Panc1 (cell line): ENCODE measurements at regions of chr2 and their contacts with region 1.

Region 1: DNA sequence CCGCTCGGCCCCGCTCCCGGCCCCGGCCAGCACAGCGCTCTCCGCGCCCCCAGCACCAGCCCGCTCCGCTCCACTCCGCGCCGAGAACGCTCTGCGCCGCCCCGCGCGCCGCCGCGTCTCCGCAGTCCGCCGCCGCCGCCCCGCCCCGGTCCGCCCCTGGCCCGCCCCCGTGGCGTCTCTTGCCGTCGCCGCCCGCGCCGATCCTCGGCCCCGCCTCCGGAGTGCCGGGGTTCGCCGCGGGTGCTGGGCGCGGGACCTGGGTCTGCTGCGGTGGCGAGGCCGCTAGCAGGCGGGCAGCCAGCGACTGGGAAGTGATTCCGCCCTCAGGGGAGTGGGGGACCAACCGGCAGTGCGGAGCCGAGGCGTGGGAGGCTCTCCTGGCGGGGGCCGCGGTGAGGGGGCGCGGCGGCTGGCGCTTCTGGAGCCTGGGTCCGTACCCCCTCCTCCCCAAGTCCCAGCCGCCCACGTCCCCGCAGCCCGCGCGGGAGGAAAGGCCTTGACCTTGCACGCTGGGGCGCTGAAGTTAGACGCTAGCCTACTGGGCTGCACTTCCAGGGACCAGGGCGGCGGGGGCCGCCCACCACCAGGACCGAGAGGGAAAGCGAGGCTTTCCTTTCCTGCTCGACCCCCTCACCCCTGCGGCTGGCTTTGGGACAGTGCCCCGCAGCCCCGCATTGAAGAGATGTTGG is at the start of gene HS6ST1:
- DNase-seq: no peak
- ATAC-seq: peak; percentile 88
- H3K4me3 ChIP-seq: peak within 1 kb of the TSS; percentile 59 to 63
- H3K27ac ChIP-seq: peak within 1 kb of the TSS; percentile 48; the same call in 1 of the 2 replicates
- H3K4me1 ChIP-seq: peaks cover 12% of the 10 kb centered on the region
- H3K27me3 ChIP-seq: no peaks in the 10 kb centered on the region
- CTCF ChIP-seq: no peak
- total RNA-seq, gene HS6ST1: 22.0 TPM

Region 2: DNA sequence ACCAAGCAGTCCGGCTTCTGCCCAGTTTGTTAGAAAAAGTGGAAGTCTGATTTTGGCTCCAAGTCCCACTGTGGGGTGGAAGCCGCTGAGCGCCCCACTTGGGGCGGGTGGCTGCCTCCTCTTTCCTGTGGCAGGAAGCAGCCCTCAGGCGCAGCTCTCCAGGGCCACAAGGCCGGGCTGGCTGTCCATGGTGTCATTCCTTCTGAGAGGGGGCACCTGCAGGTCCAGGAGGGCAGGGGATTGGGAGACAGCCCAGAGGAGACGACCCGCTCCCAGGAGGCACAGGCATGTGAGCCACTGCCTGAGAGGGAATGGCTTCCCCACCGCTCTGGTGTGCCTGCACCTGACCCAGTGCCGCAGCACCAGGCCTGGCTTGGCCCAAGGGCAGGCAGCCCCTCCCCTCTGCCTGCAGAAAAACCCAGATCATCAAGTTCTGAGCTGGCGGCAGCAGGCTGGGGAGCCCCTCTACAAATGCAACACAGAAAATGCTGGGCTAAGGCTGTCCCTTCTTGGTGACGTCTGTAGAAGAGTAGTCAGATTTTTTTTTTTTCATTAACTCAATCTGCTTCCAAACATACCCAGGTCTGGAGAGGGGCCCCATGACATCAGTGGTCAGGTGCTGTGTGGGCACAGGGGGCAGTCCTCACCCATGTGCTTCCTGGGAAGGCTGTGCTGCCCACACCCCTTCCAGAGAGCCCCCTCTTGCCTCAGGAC is 38.6 kb before region 1 on chr2:
- CTCF ChIA-PET with region 1: no interaction called
- POLR2A ChIA-PET with region 1: no interaction called
- in situ Hi-C with region 1: no loop called
- intact Hi-C with region 1: no loop called
- DNase-seq: no peak
- ATAC-seq: no peak
- H3K4me3 ChIP-seq: no peak overlapping the region
- H3K27ac ChIP-seq: no peak overlapping the region
- H3K4me1 ChIP-seq: peaks cover 3% of the 10 kb centered on the region
- H3K27me3 ChIP-seq: no peaks in the 10 kb centered on the region
- CTCF ChIP-seq: no peak

Region 3: GRCh38 chr2:128302011-128302743 is 16.7 kb before region 1 on chr2:
- CTCF ChIA-PET with region 1: interaction called, 10 read pairs
- POLR2A ChIA-PET with region 1: no interaction called
- in situ Hi-C with region 1: no loop called
- intact Hi-C with region 1: no loop called
- DNase-seq: no peak
- ATAC-seq: 0 out of 2 replicates have a peak, but pooled peaks have one; percentile 4
- H3K4me3 ChIP-seq: no peak overlapping the region
- H3K27ac ChIP-seq: no peak overlapping the region
- H3K4me1 ChIP-seq: peaks cover 12% of the 10 kb centered on the region
- H3K27me3 ChIP-seq: no peaks in the 10 kb centered on the region
- CTCF ChIP-seq: no peak

Region 4: GRCh38 chr2:128354726-128355470 is 36.0 kb after region 1 on chr2:
- CTCF ChIA-PET with region 1: no interaction called
- POLR2A ChIA-PET with region 1: no interaction called
- in situ Hi-C with region 1: no loop called
- intact Hi-C with region 1: no loop called
- DNase-seq: no peak
- ATAC-seq: no peak
- H3K4me3 ChIP-seq: no peak overlapping the region
- H3K27ac ChIP-seq: no peak overlapping the region
- H3K4me1 ChIP-seq: no peaks in the 10 kb centered on the region
- H3K27me3 ChIP-seq: no peaks in the 10 kb centered on the region
- CTCF ChIP-seq: no peak